AG04449 (cell line): ENCODE measurements at regions of chr14 and their contacts with region 1.

Region 1: GRCh38 chr14:59438195-59438647 is 27.0 kb downstream of the GPR135 start:
- DNase-seq: peak; percentile 71
- H3K4me3 ChIP-seq: no peak overlapping the region
- CTCF ChIP-seq: no peak

Region 2: DNA sequence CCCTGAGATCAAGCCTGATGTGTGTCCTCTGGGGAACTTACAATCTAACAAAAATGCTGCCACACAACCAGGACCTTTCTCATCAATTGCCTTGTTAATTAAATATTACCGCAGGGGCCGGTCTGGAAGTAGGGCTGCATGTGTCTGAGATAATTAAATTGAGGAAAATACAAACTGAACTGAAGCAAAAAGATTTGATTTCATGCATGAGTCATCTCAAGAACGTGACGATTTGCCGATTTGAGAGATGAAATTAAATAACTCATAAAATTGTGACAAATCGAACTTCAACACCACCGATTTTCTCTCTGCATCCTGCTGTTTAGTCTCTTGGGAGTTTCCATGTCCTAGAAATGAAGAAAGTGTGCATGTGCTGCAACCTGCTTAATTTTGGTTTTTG is 344.3 kb before region 1 on chr14:
- CTCF ChIA-PET with region 1: no interaction called
- POLR2A ChIA-PET with region 1: no interaction called
- DNase-seq: no peak
- H3K4me3 ChIP-seq: no peak overlapping the region
- CTCF ChIP-seq: no peak

Region 3: DNA sequence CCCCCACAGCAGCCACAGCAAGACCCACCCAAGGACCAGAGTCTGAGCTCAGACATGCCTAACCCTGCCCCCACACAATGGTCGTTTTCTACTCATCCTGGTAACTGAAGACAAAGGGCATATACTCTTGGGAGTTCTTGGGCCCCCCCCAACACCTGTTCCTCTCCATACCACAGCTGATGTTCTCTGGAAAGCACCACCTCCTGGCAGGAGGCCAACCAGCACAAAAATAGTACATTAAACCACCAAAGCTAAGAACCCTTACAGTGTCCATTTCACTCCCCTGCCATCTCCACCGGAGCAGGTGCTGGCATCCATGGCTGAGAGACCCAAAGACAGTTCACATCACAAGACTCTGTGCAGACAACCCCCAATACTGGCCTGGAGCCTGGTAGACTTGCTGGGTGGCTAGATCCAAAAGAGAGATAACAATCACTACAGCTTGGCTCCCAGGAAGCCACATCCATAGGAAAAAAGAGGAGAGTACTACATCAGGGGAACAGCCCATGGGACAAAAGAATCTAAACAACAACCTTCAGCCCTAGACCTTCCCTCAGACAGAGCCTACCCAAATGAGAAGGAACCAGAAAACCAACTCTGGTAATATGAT is 330.3 kb before region 1 on chr14:
- CTCF ChIA-PET with region 1: interaction called, 10 read pairs
- POLR2A ChIA-PET with region 1: no interaction called
- DNase-seq: no peak
- H3K4me3 ChIP-seq: no peak overlapping the region
- CTCF ChIP-seq: no peak

Region 4: DNA sequence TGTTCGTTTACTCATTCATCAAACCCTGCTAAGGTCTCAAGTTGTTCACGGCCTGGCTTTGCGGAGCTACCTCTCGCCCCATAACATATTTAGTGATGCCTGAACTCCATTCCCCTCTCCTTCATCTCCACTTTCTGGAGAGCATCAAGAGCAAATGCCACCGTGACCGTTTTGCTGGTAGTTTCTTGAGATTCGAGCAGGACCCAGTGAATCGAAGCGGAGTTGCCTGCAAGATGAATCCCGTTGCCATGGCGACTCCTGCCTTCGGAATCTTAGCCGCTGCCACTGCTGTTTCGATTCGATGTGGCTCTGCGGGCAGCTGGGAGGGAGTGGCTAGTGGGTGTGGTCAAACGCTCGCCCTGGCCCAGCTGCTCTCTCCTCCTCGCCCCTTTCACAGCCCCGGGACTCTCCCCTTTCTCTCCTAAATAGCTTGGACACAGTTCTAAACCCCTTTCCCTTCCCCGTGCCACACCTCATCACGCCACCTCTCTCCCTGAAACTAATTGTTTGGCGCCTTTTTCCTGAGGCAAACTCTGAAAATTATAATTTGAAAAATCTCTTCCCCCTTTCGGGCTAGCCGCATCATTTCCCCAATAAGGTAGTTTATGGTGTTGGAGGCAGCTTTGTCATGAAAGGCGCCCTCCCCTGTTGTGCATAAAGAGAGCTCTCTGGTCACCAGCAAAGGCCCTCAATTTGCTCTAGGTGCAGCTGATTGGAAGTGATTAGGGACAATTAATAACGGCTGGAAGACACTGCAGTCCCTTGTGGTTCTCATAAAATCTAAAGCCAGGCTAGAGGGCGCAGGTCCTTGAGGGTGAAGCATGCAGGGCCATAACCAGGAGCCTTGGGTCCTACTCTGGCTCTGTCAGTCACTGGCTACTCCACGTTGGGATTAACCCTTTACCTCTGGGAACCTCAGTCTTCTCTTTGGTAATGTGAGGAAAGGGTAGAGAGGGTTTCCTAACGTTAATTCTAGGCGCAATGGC is 248.1 kb before region 1 on chr14:
- CTCF ChIA-PET with region 1: interaction called, 11 read pairs
- POLR2A ChIA-PET with region 1: no interaction called
- DNase-seq: peak; percentile 45
- H3K4me3 ChIP-seq: peak overlapping the region; percentile 94
- CTCF ChIP-seq: no peak

Region 5: DNA sequence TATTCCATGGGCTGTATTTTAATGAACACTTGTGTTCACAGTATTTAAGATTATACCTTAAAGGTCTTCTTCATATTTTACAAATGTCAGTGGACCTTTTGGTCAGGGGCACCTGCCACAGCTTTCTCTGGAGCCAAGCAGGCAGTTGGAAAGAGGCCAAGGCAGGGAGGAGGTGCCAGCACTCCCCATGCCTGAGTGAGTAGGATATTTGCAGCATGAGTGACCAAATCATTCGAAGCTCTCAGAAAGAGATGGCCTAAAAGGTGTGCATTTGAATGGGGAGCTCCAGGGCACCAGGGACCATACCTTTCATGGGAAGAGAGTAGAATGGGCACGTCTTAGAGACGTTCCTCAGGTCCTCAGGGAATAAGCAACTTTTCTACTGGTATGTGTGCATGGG is 94.6 kb before region 1 on chr14:
- CTCF ChIA-PET with region 1: no interaction called
- POLR2A ChIA-PET with region 1: no interaction called
- DNase-seq: no peak
- H3K4me3 ChIP-seq: no peak overlapping the region
- CTCF ChIP-seq: no peak